Caco-2 (cell line): ENCODE measurements at regions of chr9 and their contacts with region 1.

Region 1: GRCh38 chr9:35029852-35030251 is 40.3 kb downstream of the DNAJB5 start:
- DNase-seq: no peak
- H3K4me3 ChIP-seq: no peak overlapping the region
- H3K4me3 Mint-ChIP-seq: no peak overlapping the region
- H3K27ac Mint-ChIP-seq: no peak overlapping the region
- H3K4me1 ChIP-seq: peaks cover 27% of the 10 kb centered on the region
- H3K4me1 Mint-ChIP-seq: peaks cover 20% of the 10 kb centered on the region
- H3K27me3 ChIP-seq: no peaks in the 10 kb centered on the region
- H3K27me3 Mint-ChIP-seq: no peaks in the 10 kb centered on the region
- CTCF ChIP-seq: no peak

Region 2: GRCh38 chr9:34989003-34989945 is 40.6 kb before region 1 on chr9 and contains the start of gene DNAJB5:
- CTCF ChIA-PET with region 1: interaction called, 4 read pairs
- POLR2A ChIA-PET with region 1: interaction called, 6 read pairs
- intact Hi-C with region 1: loop called (anchors 5 kb)
- DNase-seq: peak; percentile 98 to 99
- H3K4me3 ChIP-seq: peak within 1 kb of the TSS; percentile 85
- H3K4me3 Mint-ChIP-seq: peak within 1 kb of the TSS; percentile 95
- H3K27ac Mint-ChIP-seq: peak within 1 kb of the TSS; percentile 91
- H3K4me1 ChIP-seq: peaks cover 8% of the 10 kb centered on the region
- H3K4me1 Mint-ChIP-seq: peaks cover 9% of the 10 kb centered on the region
- H3K27me3 ChIP-seq: no peaks in the 10 kb centered on the region; the same call in 1 of the 2 replicates
- H3K27me3 Mint-ChIP-seq: peaks cover 2% of the 10 kb centered on the region
- CTCF ChIP-seq: no peak
- total RNA-seq, gene DNAJB5: 3.1 and 3.4 TPM in 2 replicates